Posterior cingulate gyrus (tissue), 11 donors: ENCODE measurements at regions of chr11 and their contacts with region 1.

Region 1: GRCh38 chr11:57345555-57346211 is 7.5 kb downstream of the P2RX3 start:
- DNase-seq: peak; percentile 34 to 93 (median 72)

Region 2: GRCh38 chr11:57456960-57457642 is 111.4 kb after region 1 on chr11:
- intact Hi-C with region 1: loop called (anchors 10 kb)
- DNase-seq: peak; percentile 78 to 98 (median 90)

Region 3: DNA sequence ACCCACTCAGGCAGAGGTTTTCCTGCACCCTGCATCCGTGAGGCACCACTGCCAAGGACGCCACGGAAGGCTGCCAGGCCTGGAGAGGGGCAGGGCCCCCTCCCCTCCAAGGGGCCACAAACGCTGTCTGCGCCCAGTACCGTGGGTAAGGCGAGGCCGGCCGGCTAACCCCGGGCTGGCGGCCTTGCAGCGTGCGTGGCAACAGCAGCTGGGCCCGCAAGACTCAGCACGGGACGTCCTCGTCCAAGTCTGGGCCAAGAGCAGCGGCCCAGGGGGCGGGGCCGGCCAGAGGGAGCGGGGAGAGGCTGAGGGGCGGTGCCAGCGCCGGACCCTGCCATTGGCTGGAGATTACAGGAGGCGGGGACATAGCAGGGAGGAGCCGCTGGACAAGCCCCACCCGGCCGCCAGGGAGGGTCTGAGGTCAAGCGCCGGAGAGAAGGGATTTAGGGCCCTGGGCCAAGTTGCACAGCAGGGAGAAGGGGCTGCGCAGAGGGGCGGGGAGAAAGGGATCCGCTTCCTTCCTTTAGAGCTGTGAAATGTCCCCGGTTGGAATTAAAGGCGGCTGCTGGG is 153.8 kb after region 1 on chr11:
- intact Hi-C with region 1: no loop called
- DNase-seq: peak; percentile 85 to 99 (median 94)